KBM-7 (cell line): ENCODE measurements at regions of chr3 and their contacts with region 1.

Region 1: DNA sequence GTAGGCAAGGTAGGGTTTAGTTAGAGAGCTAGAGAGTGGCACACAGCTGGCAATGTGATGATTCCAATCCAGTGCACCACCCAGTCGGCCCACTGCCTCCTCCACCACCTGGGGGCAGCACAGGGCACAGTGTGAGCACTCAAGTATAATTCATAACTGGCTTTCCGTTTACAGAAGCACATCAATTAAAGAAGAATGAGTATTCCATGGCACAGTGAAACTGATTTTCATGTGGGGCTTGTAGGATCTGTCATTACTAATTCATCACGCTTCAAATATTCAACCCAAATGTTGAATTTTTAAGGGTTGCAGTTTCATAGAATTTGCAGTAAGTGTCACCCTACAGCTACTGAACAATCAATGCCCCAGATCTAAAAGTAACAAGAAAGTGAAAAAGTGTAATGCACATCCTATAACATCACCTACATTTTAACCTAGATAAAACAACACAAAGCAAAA is 149.9 kb downstream of the IGSF11 start:
- DNase-seq: peak; percentile 58

Region 2: DNA sequence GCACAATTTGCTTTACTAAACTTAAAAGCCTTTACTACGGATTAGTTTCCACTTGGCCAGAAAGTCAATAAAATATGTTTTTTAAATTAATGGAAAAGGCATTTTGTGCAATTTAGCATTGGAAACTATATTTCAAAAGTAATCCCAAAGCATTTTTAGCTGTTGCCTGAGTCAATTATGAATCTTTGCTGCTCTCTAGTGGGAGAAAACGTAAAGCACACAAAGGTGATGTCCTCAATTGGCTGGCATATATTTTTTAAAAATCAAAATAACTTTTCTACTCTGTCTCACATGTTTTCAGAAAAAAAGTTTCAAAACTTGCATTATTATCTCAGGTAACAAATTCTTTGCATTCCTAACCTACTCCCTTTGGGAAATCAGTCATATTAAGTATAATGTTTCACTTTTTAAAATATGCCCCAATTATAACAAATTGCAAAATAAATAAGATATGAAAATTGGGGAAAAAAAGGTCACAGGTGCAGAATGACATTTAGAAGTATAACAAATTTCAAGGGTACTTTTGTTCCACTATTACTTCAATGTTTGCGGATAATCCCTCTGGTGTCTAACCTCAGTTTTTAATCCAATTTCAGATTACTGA is 213.9 kb after region 1 on chr3:
- in situ Hi-C with region 1: loop called (anchors 25 kb)
- DNase-seq: peak; percentile 43

Region 3: GRCh38 chr3:119676771-119677640 is 792.2 kb after region 1 on chr3 and contains the start of gene COX17:
- in situ Hi-C with region 1: loop called (anchors 25 kb)
- DNase-seq: peak; percentile 95